Transverse colon (tissue), 4 donors: ENCODE measurements at regions of chr2 and their contacts with region 1.

Region 1: DNA sequence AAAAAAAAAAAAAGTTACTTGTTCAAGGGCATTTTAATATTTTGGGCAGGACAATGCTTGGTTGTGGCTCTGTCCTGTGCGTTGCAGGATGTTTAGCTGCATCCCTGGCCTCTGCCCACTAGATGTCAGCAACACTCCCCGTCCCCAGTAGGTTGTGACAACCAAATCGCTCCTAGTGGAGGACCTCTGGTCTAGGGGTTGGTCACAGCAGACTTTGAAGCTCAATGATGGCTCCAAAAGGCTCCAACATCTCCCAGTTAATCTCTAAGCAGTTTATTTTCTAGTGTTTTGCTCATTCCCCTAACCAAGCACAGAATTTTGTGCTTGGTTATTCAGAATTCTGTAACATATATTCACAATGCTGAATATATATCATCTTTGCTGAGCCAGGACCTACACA is 67.0 kb downstream of the CHRNA1 start:
- DNase-seq: peak; percentile 49
- H3K4me3 ChIP-seq: no peak overlapping the region
- H3K27ac ChIP-seq: no peak overlapping the region
- H3K4me1 ChIP-seq: no peaks in the 10 kb centered on the region
- H3K27me3 ChIP-seq: no peaks in the 10 kb centered on the region
- CTCF ChIP-seq: peak; percentile 46 to 69 (median 64)
- EP300 ChIP-seq: no peak
- POLR2A ChIP-seq: no peak

Region 2: DNA sequence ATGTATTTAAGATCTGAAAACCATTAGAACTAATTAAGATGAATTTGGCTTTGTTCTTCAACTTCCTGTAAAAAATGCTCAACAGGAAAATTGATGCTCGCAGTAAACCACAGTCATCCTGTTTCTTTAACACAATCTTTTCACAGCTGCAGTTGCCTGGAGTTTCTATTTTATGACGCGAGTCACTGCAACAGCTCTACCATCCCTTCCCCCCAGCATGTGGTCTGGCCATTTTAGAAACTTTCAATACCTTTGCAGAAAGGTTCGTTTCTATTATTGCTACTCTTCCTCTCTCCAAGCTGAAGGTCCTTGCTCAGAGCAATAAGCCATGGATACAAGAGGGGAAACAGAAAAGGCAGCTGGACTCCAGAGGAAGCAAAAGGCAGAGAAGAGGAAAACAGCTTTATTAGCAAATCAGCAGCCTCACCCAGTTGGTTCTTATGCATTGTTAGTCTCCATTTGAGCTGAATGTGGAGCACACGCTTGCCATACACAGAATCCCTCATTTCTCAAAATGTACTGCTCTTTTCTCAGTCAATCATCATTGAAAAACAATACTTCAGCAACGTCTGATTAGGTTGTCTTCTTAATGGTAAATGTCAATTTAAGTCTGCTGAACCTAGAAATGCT is 103.6 kb before region 1 on chr2:
- in situ Hi-C with region 1: loop called in 1 of 4 experiments (anchors 25 kb)
- intact Hi-C with region 1: no loop called
- DNase-seq: peak; percentile 58
- H3K4me3 ChIP-seq: peak overlapping the region in 2 of 4 donors; percentile 4 to 5
- H3K27ac ChIP-seq: peak overlapping the region; percentile 81 to 84 (median 83)
- H3K4me1 ChIP-seq: peaks cover 10 to 51% (median 16%) of the 10 kb centered on the region in 4 donors
- H3K27me3 ChIP-seq: no peaks in the 10 kb centered on the region
- CTCF ChIP-seq: no peak
- EP300 ChIP-seq: no peak
- POLR2A ChIP-seq: peak; percentile 46